Heart right ventricle (tissue), 16 donors: ENCODE measurements at regions of chr17 and their contacts with region 1.

Region 1: DNA sequence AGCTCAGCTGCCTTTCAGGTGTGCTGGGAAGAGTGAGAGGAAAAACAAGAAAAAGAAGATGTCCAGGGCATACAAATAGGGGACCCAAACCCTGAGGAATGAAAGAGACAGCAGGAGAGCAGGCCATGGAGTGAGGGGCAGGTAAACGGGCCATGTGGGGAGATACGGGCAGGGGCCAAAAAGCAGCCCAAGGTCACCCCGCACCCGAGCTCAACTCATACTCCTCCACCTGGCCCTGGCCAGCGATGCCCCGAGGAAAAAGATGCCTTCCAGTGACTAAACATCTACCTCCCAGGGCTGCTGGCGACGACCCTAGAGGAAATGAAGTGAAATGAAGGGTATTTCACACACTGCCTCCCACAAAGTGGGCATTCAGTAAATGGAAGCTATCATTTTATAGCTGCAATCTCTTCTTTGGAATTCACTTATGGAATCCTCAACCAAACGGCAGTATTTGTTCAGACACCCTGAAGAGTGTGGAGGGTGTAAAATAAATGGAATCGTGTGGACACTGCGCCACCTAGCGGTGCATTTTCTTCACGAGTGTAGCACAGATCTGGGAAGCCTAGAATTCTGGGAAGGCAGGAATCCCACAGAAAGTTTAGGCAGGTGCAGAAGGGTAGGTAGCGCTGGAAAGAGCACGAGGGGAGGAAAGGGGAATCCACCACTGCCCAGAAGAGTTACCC is 14.9 kb downstream of the ELAC2 start:
- DNase-seq: peak; percentile 77 to 81
- ATAC-seq: peak; percentile 81 to 95 (median 88)
- H3K4me3 ChIP-seq: no peak overlapping the region
- H3K27ac ChIP-seq: no peak overlapping the region
- H3K4me1 ChIP-seq: peaks cover 0 to 6% (median 0%) of the 10 kb centered on the region in 9 donors
- H3K27me3 ChIP-seq: no peaks in the 10 kb centered on the region
- CTCF ChIP-seq: peak; percentile 69 to 90 (median 83)

Region 2: DNA sequence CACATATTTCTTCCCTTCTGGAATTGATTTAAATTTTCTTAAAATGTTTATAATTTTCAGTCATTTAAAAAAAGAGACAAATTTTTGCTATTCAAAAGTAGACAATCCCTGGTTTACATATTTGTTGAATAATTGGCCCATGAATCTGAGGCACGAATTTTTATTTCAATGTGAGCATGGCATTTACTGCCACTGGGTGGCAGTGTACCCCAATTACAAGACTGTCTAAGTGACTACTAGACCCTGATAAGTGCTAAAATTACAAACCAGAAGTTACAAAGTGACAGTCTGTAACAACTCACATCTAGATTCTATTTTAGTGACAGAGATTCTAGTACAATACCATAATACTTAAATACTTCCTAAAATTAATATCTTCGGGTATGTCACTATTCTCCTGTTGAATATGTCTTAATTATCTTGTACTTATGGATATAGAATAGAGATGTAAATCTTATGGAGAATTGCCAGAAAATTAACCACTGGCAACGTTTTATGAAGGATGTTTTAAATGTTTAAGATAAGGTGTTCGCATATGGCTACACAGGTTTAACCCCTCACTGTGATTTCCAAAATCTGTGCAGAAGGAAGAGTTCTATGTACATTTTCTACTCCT is 746.4 kb before region 1 on chr17:
- intact Hi-C with region 1: loop called in 8 of 10 experiments (anchors 2 to 10 kb)
- DNase-seq: peak in 1 of 2 donors; percentile 15
- ATAC-seq: peak; percentile 56 to 83 (median 78)
- H3K4me3 ChIP-seq: no peak overlapping the region
- H3K27ac ChIP-seq: no peak overlapping the region
- H3K4me1 ChIP-seq: peaks cover 0 to 18% (median 0%) of the 10 kb centered on the region in 9 donors
- H3K27me3 ChIP-seq: no peaks in the 10 kb centered on the region
- CTCF ChIP-seq: peak; percentile 57 to 82 (median 73)

Region 3: DNA sequence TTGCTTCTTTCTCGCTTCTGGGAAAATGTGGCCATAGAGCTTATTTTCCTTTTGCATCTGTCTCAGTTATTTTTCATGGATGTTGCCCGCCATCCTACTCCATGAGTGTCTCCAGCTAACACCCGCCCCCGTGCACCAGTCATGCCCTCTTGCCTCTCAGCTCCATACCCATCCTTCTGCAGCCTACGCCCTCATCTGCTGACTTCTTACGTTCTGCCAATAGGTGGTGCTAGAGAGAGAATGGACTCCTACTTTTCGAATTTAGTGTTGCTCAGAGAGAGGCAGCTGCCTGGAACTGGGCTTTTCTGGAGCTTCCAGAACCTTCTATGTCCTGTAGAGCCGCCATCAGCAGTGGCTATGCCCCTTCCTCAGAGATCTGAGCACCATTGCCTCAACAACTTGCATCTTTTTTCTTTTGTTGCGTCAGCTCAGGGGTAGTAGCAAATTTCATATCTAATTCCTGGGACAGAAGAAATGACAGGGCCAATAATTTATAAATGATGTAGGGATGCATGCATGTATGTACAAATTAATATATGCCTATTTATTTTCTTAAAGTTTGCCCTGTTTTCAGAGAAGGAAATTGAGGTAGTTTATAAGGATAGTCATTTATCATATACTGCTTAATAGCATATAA is 456.9 kb before region 1 on chr17:
- intact Hi-C with region 1: loop called in 7 of 10 experiments (anchors 5 to 10 kb)
- DNase-seq: peak in 1 of 2 donors; percentile 31
- ATAC-seq: peak; percentile 73 to 90 (median 84)
- H3K4me3 ChIP-seq: no peak overlapping the region
- H3K27ac ChIP-seq: no peak overlapping the region
- H3K4me1 ChIP-seq: peaks cover 0 to 11% (median 0%) of the 10 kb centered on the region in 9 donors
- H3K27me3 ChIP-seq: no peaks in the 10 kb centered on the region
- CTCF ChIP-seq: peak; percentile 45 to 78 (median 72)

Region 4: DNA sequence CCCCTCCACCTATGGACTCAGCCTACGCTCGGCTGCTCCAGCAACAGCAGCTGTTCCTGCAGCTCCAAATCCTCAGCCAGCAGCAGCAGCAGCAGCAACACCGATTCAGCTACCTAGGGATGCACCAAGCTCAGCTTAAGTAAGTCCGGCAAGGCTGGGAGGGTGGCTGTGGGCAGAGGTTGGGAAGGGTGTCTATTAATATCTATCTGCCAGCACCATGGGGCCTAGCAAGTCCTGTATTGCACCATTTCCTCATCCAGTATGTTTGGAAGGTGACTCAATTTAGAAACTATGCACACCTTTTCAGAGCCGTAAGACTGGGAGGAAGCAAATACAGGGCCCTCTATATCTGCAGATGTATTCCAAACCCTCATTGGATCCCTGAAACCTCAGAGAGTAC is 258.6 kb before region 1 on chr17:
- intact Hi-C with region 1: loop called in 1 of 10 experiments (anchors 10 kb)
- DNase-seq: peak; percentile 43 to 68
- ATAC-seq: peak; percentile 70 to 97 (median 91)
- H3K4me3 ChIP-seq: peak overlapping the region in 8 of 10 donors; percentile 1 to 38 (median 14)
- H3K27ac ChIP-seq: peak overlapping the region; percentile 24 to 87 (median 79)
- H3K4me1 ChIP-seq: peaks cover 0 to 23% (median 7%) of the 10 kb centered on the region in 9 donors
- H3K27me3 ChIP-seq: no peaks in the 10 kb centered on the region
- CTCF ChIP-seq: no peak

Region 5: GRCh38 chr17:12789075-12789776 is 213.7 kb before region 1 on chr17 and contains the start of gene ARHGAP44:
- intact Hi-C with region 1: loop called in 1 of 10 experiments (anchors 10 kb)
- DNase-seq: peak; percentile 55 to 76
- ATAC-seq: peak; percentile 89 to 98 (median 92)
- H3K4me3 ChIP-seq: peak within 1 kb of the TSS; percentile 41 to 89 (median 71)
- H3K27ac ChIP-seq: peak within 1 kb of the TSS in 9 of 10 donors; percentile 44 to 75 (median 58)
- H3K4me1 ChIP-seq: peaks cover 0 to 15% (median 3%) of the 10 kb centered on the region in 9 donors
- H3K27me3 ChIP-seq: peaks cover 0 to 31% (median 0%) of the 10 kb centered on the region in 7 donors
- CTCF ChIP-seq: peak in 1 of 9 donors; percentile 15
- total RNA-seq, gene ARHGAP44: 6.1 to 10.6 (median 8.7) TPM